Activated CD8-positive, alpha-beta T cell treated with anti-CD3 and anti-CD28 coated beads for 36 hours (primary cell): ENCODE measurements at regions of chr15 and their contacts with region 1.

Region 1: DNA sequence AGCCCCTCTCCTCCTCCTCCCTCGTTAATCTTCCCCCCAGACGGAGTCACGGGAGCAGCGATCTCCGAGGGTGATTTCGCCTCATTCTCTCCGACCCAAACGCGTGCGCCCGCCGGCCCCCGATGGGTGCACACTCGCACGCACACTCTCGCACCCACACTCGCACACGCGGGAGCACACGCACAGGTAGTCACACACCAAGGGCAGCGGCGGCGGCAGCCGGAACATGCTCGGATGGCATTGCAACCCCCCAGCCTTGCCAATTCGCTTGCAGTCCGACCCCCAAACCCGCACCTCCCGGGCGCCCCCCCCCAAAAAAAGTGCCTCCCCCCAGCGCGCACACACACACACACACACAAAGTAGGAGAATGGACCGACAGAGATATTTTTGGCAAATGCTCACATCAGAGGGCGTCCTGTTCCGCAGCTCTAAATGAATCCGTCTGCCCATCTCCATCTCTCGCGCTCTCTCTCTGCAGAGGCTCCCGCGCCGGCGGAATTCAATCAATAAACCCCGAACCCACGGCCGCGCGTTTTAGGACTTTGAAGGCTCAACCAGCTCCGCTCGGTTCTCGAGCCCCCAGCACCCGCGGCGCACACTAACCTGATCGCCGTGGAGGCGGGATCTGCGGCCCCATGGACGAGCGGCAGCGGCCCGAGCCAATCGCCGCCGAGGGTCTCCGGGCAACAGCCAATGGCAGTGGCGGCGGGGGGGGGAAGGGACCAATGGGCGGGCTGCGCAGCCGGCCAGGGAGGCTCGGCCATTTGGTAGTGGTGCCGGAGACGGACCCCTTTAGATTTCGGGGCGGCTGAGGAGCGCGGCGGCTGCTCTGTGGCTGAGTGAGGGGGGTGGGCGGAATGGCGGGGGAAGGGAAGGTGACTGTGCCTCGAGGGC is at the start of gene ANP32A:
- DNase-seq: peak; percentile 96
- ATAC-seq: peak; percentile 78
- H3K4me3 Mint-ChIP-seq: peak within 1 kb of the TSS; percentile 88
- H3K27ac Mint-ChIP-seq: peak within 1 kb of the TSS; percentile 96
- H3K4me1 Mint-ChIP-seq: peaks cover 30% of the 10 kb centered on the region
- H3K27me3 Mint-ChIP-seq: no peaks in the 10 kb centered on the region
- CTCF ChIP-seq: no peak
- total RNA-seq, gene ANP32A: 239 to 246 TPM

Region 2: DNA sequence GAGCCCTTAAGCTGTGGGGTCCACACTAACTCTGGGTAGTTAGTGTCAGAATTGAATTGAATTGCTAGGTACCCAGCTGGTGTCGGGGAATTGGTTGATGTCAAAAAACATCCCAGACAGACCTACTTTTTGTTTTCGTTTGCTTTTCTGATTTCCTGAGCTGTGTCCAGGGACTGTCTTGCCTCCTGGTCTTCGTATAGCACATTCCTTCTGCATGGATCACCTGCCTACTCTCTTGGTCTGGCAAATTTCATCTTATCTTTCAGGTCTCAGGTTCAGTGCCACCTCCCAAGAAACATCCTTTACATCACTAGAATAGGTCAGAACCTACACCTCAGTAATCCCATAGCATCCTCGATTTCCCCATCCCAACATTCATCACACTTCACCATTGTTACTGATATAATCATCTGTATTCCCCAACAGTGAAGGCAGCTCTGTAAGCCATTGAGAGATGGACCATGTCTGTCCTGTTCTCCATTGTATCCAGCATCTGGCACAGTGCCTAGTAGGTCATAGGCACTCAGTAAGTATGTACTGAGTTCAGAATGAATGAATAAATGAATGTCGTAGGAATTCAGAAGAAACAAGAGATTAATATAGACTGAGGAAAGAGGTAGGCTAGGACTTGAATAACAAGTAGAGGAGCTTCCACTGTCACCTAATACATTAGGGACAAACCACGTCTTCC is 81.0 kb before region 1 on chr15:
- CTCF ChIA-PET with region 1: no interaction called
- POLR2A ChIA-PET with region 1: no interaction called
- intact Hi-C with region 1: no loop called
- DNase-seq: no peak
- ATAC-seq: no peak
- H3K4me3 Mint-ChIP-seq: no peak overlapping the region
- H3K27ac Mint-ChIP-seq: no peak overlapping the region
- H3K4me1 Mint-ChIP-seq: no peaks in the 10 kb centered on the region
- H3K27me3 Mint-ChIP-seq: no peaks in the 10 kb centered on the region
- CTCF ChIP-seq: no peak

Region 3: DNA sequence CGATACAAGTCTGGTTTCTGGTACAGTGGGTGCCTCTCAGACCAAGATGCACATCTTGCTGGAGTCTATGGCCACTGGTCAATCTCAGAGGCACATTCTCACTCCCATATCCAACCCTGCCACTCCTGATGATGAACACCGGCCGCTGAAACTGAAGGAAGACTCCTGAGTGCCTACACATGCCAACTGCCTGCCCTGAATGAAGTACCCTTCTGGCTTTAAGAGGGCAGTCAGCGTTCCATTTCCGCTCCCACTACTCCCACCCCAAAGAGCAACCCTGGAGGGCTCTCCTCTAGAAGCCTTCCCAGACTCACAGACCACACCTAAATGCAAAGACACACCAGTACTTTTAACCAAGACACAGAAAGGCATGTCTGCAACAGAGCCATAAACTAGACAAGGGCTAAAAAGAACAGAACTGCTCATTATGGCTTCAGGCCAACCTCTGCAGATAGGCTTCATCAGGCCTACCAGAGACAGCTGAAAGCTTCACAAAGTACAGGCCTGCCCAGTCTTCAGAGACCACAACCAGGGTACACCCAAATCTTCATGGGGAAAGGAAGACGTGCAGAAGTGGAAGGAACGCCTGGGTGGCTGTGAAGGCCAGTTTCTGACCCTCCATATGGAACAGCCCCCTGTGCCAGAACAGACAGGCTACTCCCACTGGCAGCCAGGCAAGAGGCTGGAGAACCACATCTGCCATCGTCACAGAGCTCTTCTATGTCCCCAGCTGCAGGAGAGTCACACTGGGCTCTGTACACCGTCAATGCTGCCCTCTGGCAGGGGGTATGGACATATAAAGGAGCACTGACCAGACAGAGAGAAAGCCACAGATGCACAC is 14.1 kb before region 1 on chr15:
- CTCF ChIA-PET with region 1: interaction called, 4 read pairs
- POLR2A ChIA-PET with region 1: interaction called, 51 read pairs
- intact Hi-C with region 1: no loop called
- DNase-seq: no peak
- ATAC-seq: no peak
- H3K4me3 Mint-ChIP-seq: no peak overlapping the region
- H3K27ac Mint-ChIP-seq: peak overlapping the region; percentile 54
- H3K4me1 Mint-ChIP-seq: peaks cover 78% of the 10 kb centered on the region
- H3K27me3 Mint-ChIP-seq: no peaks in the 10 kb centered on the region
- CTCF ChIP-seq: no peak